ENCODE measurements at regions of chr20 and their contacts with region 1.

Region 1: GRCh38 chr20:9514461-9515213 is at the start of gene LAMP5:
- H3K4me3 Mint-ChIP-seq: peak within 1 kb of the TSS; percentile 62
- H3K27ac Mint-ChIP-seq: no peak within 1 kb of the TSS
- H3K4me1 Mint-ChIP-seq: peaks cover 43% of the 10 kb centered on the region
- H3K27me3 Mint-ChIP-seq: peaks cover 74% of the 10 kb centered on the region

Region 2: GRCh38 chr20:9457136-9457535 is 57.5 kb before region 1 on chr20:
- intact Hi-C with region 1: no loop called
- H3K4me3 Mint-ChIP-seq: no peak overlapping the region
- H3K27ac Mint-ChIP-seq: no peak overlapping the region
- H3K4me1 Mint-ChIP-seq: peaks cover 18% of the 10 kb centered on the region
- H3K27me3 Mint-ChIP-seq: no peaks in the 10 kb centered on the region

Region 3: GRCh38 chr20:9467995-9468394 is 46.6 kb before region 1 on chr20:
- intact Hi-C with region 1: loop called (anchors 2 kb)
- H3K4me3 Mint-ChIP-seq: no peak overlapping the region
- H3K27ac Mint-ChIP-seq: no peak overlapping the region
- H3K4me1 Mint-ChIP-seq: peaks cover 7% of the 10 kb centered on the region
- H3K27me3 Mint-ChIP-seq: peaks cover 7% of the 10 kb centered on the region

Region 4: DNA sequence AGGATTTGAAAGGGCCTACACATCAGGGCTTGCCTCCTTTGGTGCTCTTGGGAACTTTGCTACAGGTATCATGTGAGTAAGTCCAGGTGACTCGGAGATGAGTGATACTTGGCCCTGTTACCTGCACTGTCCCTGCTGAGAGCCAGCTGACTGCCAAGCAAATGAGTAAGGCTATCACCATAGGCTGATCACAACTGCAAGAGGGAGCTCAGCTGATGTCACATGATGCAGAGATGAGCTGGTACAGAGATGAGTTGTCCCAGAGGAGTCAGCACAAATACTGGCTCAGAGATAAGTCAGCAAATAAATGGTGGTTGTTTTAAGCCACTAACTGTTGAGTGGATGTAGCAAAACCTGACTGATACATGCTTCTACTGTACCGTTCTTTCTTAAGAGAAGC is 41.1 kb after region 1 on chr20:
- intact Hi-C with region 1: no loop called
- H3K4me3 Mint-ChIP-seq: no peak overlapping the region
- H3K27ac Mint-ChIP-seq: no peak overlapping the region
- H3K4me1 Mint-ChIP-seq: no peaks in the 10 kb centered on the region
- H3K27me3 Mint-ChIP-seq: peaks cover 26% of the 10 kb centered on the region

Region 5: DNA sequence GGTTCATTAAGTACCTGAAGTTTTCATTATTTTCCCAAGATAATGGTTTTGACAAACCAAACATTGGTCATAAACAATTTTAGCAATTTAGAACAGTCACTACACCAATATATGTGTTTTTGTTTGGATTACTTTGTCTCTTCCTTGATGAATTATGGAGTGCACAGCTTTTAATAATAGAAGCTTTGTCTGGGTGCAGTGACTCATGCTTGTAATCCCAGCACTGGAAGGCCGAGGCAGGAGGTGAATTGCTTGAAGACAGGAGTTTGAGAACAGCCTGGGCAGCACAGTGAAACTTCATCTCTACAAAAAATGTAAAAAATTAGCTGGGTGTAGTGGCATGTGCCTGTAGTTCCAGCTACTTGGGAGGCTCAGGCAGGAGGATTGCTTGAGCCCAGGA is 430.8 kb after region 1 on chr20:
- intact Hi-C with region 1: no loop called
- H3K4me3 Mint-ChIP-seq: no peak overlapping the region
- H3K27ac Mint-ChIP-seq: no peak overlapping the region
- H3K4me1 Mint-ChIP-seq: peaks cover 5% of the 10 kb centered on the region
- H3K27me3 Mint-ChIP-seq: peaks cover 7% of the 10 kb centered on the region

Region 6: GRCh38 chr20:10060226-10060625 is 545.6 kb after region 1 on chr20:
- intact Hi-C with region 1: no loop called
- H3K4me3 Mint-ChIP-seq: no peak overlapping the region
- H3K27ac Mint-ChIP-seq: no peak overlapping the region
- H3K4me1 Mint-ChIP-seq: peaks cover 3% of the 10 kb centered on the region
- H3K27me3 Mint-ChIP-seq: peaks cover 19% of the 10 kb centered on the region

Measured in dendritic cell treated with granulocyte-macrophage colony-stimulating factor and Interleukin-4, amounts not matched to agents 40 ng/mL and 50 ng/mL, for 4 days (primary cell).